Ascending aorta (tissue), 2 donors: ENCODE measurements at regions of chr9 and their contacts with region 1.

Region 1: GRCh38 chr9:127611899-127612790 is at the start of gene STXBP1:
- DNase-seq: peak; percentile 29 to 89
- H3K4me3 ChIP-seq: peak within 1 kb of the TSS; percentile 76 to 95
- H3K27ac ChIP-seq: peak within 1 kb of the TSS; percentile 71 to 77
- H3K4me1 ChIP-seq: peaks cover 0 to 16% of the 10 kb centered on the region in 2 donors
- H3K27me3 ChIP-seq: no peaks in the 10 kb centered on the region
- CTCF ChIP-seq: peak in 2 of 3 experiments; percentile 9 to 13
- total RNA-seq, gene STXBP1: 29.3 TPM

Region 2: DNA sequence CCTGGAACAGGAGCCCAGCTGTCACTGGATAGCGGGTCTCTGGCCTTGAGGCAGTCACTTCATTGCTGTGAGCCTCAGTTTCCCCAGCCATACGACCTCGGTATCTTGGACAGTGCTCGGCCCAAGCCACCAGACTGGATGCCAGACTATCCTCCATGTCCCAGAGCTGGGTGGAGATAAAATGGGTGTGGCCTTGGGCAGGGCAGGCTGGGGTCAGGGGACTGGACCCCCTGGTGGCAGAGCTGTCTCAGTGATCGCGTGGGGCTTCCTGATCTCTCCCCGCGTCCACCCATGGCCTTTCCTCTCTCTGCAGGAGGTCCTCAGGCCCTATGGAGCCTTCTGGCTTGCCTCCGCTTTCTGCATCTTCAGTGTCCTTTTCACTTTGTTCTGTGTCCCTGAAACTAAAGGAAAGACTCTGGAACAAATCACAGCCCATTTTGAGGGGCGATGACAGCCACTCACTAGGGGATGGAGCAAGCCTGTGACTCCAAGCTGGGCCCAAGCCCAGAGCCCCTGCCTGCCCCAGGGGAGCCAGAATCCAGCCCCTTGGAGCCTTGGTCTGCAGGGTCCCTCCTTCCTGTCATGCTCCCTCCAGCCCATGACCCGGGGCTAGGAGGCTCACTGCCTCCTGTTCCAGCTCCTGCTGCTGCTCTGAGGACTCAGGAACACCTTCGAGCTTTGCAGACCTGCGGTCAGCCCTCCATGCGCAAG is 205.2 kb before region 1 on chr9:
- intact Hi-C with region 1: no loop called
- DNase-seq: no peak
- H3K4me3 ChIP-seq: no peak overlapping the region
- H3K27ac ChIP-seq: no peak overlapping the region
- H3K4me1 ChIP-seq: no peaks in the 10 kb centered on the region
- H3K27me3 ChIP-seq: no peaks in the 10 kb centered on the region
- CTCF ChIP-seq: no peak

Region 3: GRCh38 chr9:127770905-127771569 is 158.9 kb after region 1 on chr9:
- intact Hi-C with region 1: loop called (anchors 2 kb)
- DNase-seq: peak; percentile 94 to 99
- H3K4me3 ChIP-seq: peak overlapping the region; percentile 62 to 64
- H3K27ac ChIP-seq: peak overlapping the region in 1 of 2 donors; percentile 59
- H3K4me1 ChIP-seq: peaks cover 3 to 8% of the 10 kb centered on the region in 2 donors
- H3K27me3 ChIP-seq: no peaks in the 10 kb centered on the region
- CTCF ChIP-seq: no peak